Colonic mucosa (tissue), 4 donors: ENCODE measurements at regions of chr1 and their contacts with region 1.

Region 1: DNA sequence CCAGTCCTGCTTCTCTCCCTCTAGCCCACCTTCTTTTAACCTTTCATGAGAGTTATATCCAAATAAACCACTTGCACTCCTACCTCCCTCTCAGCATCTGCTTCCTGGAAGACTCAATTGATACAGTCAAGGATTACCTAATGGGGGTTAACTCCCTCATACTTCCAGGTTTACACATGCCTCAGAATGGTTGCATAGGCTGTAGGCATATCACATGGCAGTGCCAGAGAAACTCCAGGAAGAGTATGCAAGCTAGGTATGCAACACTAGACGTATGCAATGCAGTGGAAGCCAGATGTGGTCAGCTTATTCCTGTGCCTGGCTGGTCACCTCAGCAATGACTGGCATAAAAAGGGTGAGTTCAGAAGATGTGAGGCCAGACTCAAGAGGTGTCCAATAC is 32.7 kb upstream of the VANGL1 start:
- DNase-seq: no peak
- H3K4me3 ChIP-seq: no peak overlapping the region
- H3K27ac ChIP-seq: no peak overlapping the region
- H3K4me1 ChIP-seq: no peaks in the 10 kb centered on the region
- H3K27me3 ChIP-seq: no peaks in the 10 kb centered on the region
- CTCF ChIP-seq: no peak

Region 2: DNA sequence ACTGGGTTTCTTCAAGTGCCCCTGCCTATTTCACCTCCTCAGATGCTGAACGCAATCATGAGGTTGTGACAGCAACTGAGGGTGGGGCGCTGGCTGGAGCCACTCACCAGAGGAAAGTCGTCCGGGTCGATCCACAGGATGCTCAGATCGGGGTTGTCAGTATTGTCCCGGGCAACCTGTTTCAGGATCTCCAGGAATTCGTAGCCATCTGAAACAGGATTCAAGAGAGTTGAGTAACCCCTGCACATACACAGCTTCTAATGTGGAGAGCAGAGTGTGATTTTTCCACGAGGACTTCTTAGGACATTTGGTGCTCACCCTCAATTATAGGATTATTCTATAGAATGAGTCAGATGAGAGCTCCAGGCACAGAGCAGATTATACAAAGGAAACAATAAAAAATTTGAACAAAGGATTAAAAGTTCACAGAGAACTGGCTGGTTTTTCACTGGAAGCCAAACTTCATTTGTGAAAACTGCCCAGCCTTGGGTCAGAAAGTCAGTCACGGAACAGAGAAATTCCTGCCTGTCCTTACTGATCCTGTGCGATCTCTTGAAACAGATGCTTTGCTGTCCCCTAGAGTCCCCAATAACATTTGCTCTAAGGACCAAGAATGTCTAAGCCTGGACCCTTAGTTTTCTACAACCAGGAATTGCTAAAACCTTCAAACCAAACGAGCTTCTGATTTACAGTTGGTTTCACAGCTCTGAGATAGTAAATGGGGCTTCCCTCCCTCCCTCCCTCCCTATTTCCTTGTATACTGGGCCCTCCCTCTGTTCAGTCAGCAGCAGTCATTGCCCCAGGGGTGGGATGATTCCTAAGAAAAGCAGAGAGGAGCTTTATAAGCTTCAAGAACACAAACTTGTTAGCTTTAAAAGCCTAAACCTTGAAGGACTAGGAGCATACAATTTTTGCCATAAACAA is 96.3 kb after region 1 on chr1:
- intact Hi-C with region 1: loop called (anchors 2 kb)
- DNase-seq: no peak
- H3K4me3 ChIP-seq: no peak overlapping the region
- H3K27ac ChIP-seq: no peak overlapping the region
- H3K4me1 ChIP-seq: no peaks in the 10 kb centered on the region
- H3K27me3 ChIP-seq: no peaks in the 10 kb centered on the region
- CTCF ChIP-seq: no peak

Region 3: DNA sequence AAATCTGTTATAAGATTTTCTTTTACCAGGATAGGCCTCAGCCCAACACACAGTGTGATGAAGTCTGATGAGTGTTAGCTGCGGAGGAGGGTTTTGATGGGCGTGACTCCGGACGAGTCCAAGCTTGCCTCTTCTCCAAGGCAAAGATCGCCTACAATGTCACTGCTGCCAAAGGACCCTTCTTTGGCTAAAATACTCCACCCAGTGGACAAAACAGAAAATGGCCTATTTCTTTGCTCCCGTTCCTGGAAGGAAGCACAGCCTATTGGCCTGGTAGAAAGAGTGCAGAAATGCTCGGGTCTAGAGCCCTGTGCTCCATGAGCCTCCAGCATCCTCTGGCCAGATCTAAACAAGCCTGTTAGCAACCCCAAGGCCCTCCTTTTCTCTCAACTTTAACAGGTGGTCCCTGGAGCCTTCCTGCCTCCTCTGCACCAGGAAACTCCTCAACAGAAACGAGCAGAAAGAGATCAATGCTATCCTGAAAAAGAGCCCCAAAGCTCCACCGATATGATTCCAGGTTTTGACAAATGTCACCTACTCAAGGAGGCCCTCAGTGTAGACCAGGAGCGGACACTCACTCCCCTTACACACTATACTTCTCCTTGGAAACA is 162.9 kb after region 1 on chr1:
- intact Hi-C with region 1: loop called (anchors 5 kb)
- DNase-seq: peak; percentile 62
- H3K4me3 ChIP-seq: no peak overlapping the region
- H3K27ac ChIP-seq: no peak overlapping the region
- H3K4me1 ChIP-seq: no peaks in the 10 kb centered on the region
- H3K27me3 ChIP-seq: no peaks in the 10 kb centered on the region
- CTCF ChIP-seq: peak; percentile 45